T-cell (primary cell): ENCODE measurements at regions of chr2 and their contacts with region 1.

Region 1: GRCh38 chr2:164850235-164850634 is 8.6 kb upstream of the COBLL1 start:
- DNase-seq: no peak
- ATAC-seq: no peak
- H3K4me3 ChIP-seq: no peak overlapping the region
- H3K4me3 Mint-ChIP-seq: no peak overlapping the region
- H3K27ac ChIP-seq: no peak overlapping the region
- H3K27ac Mint-ChIP-seq: no peak overlapping the region
- H3K4me1 ChIP-seq: no peaks in the 10 kb centered on the region
- H3K4me1 Mint-ChIP-seq: no peaks in the 10 kb centered on the region
- H3K27me3 ChIP-seq: no peaks in the 10 kb centered on the region
- H3K27me3 Mint-ChIP-seq: peaks cover 0 to 2% of the 10 kb centered on the region in 2 donors

Region 2: DNA sequence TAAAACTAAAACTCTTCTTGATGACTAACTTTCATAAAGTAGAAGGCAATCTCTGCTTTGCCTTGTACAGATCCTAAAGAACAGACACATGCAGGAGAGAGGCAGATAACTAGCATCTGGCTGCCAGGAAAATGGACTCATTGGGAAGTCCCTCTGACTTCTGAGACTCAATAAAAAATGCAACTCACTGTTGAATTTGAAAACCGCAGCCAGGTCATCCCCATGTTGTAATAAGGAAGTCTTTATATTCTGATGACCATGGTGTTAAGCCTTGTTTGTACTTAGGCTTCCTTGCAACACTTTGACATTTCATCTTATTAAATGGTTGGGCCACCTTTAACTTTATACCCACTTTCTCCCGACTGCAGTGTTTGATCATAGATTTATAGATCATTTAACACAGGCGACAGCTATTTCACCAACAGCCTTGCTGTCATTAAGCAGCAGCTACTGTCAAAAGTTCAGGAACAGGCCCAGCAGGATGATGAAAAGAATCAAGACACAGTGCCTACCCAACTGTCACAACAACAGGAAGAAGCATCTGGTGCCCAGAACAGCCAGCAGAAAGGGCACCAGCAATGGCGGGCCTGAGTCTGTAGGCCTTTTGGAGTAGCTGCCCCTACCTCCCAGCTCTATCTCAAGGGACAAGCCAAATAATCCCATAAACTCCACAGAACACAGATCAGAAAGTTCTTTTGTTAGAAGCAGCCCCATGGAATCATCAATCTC is 1636.4 kb before region 1 on chr2:
- CTCF ChIA-PET with region 1: interaction called in 1 of 2 experiments, 11 read pairs
- POLR2A ChIA-PET with region 1: no interaction called
- DNase-seq: no peak
- ATAC-seq: no peak
- H3K4me3 ChIP-seq: no peak overlapping the region
- H3K4me3 Mint-ChIP-seq: no peak overlapping the region
- H3K27ac ChIP-seq: no peak overlapping the region
- H3K27ac Mint-ChIP-seq: no peak overlapping the region
- H3K4me1 ChIP-seq: no peaks in the 10 kb centered on the region
- H3K4me1 Mint-ChIP-seq: no peaks in the 10 kb centered on the region
- H3K27me3 ChIP-seq: no peaks in the 10 kb centered on the region
- H3K27me3 Mint-ChIP-seq: no peaks in the 10 kb centered on the region

Region 3: GRCh38 chr2:164644036-164644700 is 206.1 kb before region 1 on chr2:
- CTCF ChIA-PET with region 1: no interaction called
- POLR2A ChIA-PET with region 1: no interaction called
- DNase-seq: no peak
- ATAC-seq: no peak
- H3K4me3 ChIP-seq: no peak overlapping the region
- H3K4me3 Mint-ChIP-seq: no peak overlapping the region
- H3K27ac ChIP-seq: no peak overlapping the region
- H3K27ac Mint-ChIP-seq: no peak overlapping the region
- H3K4me1 ChIP-seq: no peaks in the 10 kb centered on the region
- H3K4me1 Mint-ChIP-seq: no peaks in the 10 kb centered on the region
- H3K27me3 ChIP-seq: no peaks in the 10 kb centered on the region
- H3K27me3 Mint-ChIP-seq: no peaks in the 10 kb centered on the region

Region 4: GRCh38 chr2:165015052-165015642 is 164.9 kb after region 1 on chr2:
- CTCF ChIA-PET with region 1: no interaction called
- POLR2A ChIA-PET with region 1: no interaction called
- DNase-seq: peak in 26 of 35 experiments; percentile 5 to 63 (median 28)
- ATAC-seq: peak in 2 of 4 experiments; percentile 37 to 39
- H3K4me3 ChIP-seq: no peak overlapping the region
- H3K4me3 Mint-ChIP-seq: no peak overlapping the region
- H3K27ac ChIP-seq: no peak overlapping the region
- H3K27ac Mint-ChIP-seq: no peak overlapping the region
- H3K4me1 ChIP-seq: no peaks in the 10 kb centered on the region
- H3K4me1 Mint-ChIP-seq: peaks cover 0 to 5% (median 0%) of the 10 kb centered on the region in 3 donors
- H3K27me3 ChIP-seq: no peaks in the 10 kb centered on the region
- H3K27me3 Mint-ChIP-seq: peaks cover 5 to 9% of the 10 kb centered on the region in 2 donors